ENCODE measurements at regions of chrX and their contacts with region 1.

Region 1: GRCh38 chrX:30635630-30636029 is 17.6 kb upstream of the GK start:
- DNase-seq: peak; percentile 19
- H3K4me3 Mint-ChIP-seq: no peak overlapping the region
- H3K27ac Mint-ChIP-seq: no peak overlapping the region
- H3K4me1 Mint-ChIP-seq: peaks cover 2% of the 10 kb centered on the region
- H3K27me3 Mint-ChIP-seq: no peaks in the 10 kb centered on the region

Region 2: GRCh38 chrX:30615229-30615628 is 20.4 kb before region 1 on chrX:
- CTCF ChIA-PET with region 1: interaction called, 4 read pairs
- intact Hi-C with region 1: loop called (anchors 2 kb)
- DNase-seq: no peak
- H3K4me3 Mint-ChIP-seq: no peak overlapping the region
- H3K27ac Mint-ChIP-seq: no peak overlapping the region
- H3K4me1 Mint-ChIP-seq: peaks cover 3% of the 10 kb centered on the region
- H3K27me3 Mint-ChIP-seq: no peaks in the 10 kb centered on the region

Region 3: DNA sequence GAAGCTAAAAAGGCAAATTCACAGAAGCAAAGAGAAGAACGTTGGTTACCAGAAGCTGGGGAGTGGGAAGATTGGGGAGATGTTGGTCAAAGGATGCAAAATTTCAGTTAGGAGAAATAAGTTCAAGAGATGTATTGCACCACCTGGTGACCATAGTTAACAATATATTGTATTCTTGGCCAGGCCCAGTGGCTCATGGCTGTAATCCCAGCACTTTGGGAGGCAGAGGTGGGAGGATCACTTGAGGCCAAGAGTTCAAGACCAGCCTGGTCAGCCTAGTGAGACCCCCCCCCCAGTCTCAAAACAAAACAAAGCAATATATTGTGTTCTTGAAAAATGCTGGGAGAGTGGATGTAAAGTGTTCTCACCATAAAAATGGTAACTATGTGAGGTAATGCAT is 185.5 kb after region 1 on chrX:
- CTCF ChIA-PET with region 1: no interaction called
- intact Hi-C with region 1: loop called (anchors 1 kb)
- DNase-seq: no peak
- H3K4me3 Mint-ChIP-seq: no peak overlapping the region
- H3K27ac Mint-ChIP-seq: no peak overlapping the region
- H3K4me1 Mint-ChIP-seq: peaks cover 17% of the 10 kb centered on the region
- H3K27me3 Mint-ChIP-seq: no peaks in the 10 kb centered on the region

Measured in activated naive CD4-positive, alpha-beta T cell treated with anti-CD3 and anti-CD28 coated beads for 36 hours (primary cell).